ENCODE measurements at regions of chr9 and their contacts with region 1.

Region 1: DNA sequence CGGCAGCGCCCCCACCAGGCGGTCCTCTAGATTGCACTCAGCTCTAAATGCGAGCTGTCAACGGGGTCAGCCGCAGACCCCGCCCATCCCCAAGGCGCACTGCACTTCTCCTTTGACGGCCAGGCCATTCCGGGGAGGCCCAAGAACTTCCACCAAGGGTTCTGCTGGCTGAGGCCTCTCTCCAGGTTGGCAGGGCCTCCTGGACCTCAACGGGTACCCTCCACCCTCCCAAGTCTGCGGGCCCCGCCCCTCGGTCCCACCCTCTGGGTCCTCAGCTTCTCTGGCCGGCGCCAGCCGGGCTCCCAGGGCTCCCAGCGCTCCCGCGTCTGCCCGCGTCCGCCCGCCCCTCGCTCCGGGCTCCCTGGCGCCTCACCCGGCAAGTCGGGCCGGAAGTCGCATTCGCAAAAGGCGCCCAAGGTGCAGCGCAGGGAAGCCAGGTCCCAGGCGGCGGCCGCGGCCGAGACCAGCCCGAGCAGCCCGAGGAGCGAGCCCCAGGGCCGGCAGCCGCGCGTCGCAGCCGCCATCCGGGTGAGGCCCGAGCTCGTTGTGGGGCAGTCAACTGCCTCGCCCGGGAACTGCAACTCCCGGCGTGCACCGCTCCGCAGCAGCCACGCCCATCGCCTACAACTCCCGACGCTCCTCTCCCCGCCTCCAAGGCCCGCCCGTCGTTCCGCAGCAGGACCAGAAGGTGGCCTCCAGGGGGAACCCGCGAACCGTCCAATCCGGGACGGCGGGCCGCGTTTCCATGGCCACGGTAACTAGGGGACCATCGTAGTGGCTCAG is at the start of gene TOR2A:
- DNase-seq: no peak
- H3K4me3 ChIP-seq: peak within 1 kb of the TSS; percentile 75
- CTCF ChIP-seq: peak; percentile 98

Region 2: DNA sequence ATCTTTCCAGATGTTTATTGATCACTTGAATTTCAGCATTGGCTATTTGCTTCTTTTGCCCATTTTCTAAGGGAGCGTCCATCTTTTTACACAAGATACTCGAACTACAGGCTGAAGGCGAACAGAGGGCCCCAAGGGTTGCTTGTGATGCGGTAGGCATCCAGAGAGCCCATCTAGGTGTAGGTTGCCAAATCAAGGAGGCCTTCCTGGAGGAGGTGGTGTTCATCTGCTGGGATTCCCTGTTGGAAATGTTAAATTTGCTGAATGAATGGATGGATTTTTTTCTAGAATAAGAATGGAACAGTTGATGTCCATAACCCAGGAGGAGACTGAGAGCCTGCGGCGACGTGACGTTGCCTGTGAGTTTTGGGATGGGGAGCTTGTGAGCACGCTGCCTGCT is 252.3 kb before region 1 on chr9:
- CTCF ChIA-PET with region 1: no interaction called
- POLR2A ChIA-PET with region 1: no interaction called
- DNase-seq: no peak
- H3K4me3 ChIP-seq: no peak overlapping the region
- CTCF ChIP-seq: no peak

Region 3: DNA sequence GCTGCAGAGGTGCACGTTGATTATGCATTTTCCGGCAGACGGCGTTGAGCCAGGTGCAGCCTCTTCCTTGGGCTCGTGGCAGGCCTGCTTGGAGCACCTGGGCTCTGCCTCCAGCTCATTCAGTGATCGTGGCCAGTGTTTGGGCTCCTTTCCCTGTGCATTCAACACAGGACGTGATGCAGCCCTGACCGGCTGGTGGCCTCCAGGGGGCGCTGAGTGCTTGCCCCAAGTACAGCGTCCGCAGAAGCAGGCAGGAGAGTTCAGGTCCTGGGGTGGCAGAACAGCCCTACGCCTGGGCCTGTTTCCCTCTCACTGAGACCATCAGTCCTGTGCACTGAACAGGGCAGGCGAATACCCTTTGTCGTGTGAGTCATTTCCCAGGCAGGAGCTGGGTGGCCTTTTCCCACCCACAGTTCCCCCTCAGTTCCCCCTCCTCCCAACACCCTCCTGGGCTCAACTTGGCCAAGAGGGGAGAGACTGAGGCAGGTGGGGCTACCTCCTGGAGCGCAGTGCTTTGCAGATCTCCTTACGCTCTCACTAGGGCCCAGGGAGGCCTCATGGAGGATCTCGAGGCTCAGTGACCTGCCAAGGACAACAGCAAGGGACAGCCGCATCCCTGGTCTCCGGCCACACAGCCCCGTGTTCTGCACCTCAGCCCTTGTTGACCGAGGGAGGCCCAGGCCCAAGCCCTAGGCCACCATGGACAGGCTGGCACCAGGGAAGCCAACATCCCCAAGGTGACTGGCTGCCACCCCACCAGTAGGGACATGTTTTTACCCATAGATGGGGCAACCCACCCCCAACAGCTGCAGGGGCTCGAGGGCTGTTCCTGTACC is 230.8 kb before region 1 on chr9:
- CTCF ChIA-PET with region 1: interaction called, 10 read pairs
- POLR2A ChIA-PET with region 1: no interaction called
- DNase-seq: no peak
- H3K4me3 ChIP-seq: no peak overlapping the region
- CTCF ChIP-seq: peak; percentile 95

Region 4: GRCh38 chr9:127611899-127612790 is 122.8 kb before region 1 on chr9 and contains the start of gene STXBP1:
- CTCF ChIA-PET with region 1: interaction called, 24 read pairs
- POLR2A ChIA-PET with region 1: interaction called, 3 read pairs
- DNase-seq: no peak
- H3K4me3 ChIP-seq: peak within 1 kb of the TSS; percentile 79
- CTCF ChIP-seq: peak; percentile 32

Region 5: DNA sequence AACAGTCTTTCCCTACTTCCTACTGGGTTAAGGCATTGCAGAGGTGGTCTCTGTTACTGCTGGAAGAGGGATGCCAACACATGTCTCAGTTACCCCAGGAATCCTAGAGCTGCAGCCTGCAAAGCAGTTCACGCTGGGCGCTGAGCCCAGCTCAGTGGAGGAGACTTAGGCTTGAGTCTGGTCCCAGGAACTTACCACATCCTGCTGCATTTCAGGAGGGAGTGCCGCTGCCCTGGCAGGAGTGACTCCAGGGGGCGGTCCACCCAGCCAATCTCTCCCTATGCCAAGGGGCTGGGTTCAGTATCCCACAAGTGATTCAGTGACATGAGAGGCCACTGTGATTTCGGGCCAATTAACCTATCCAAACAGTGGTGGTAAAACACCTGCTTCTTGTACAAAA is 11.5 kb before region 1 on chr9:
- CTCF ChIA-PET with region 1: interaction called, 48 read pairs
- POLR2A ChIA-PET with region 1: interaction called, 3 read pairs
- DNase-seq: no peak
- H3K4me3 ChIP-seq: no peak overlapping the region
- CTCF ChIP-seq: no peak

Region 6: DNA sequence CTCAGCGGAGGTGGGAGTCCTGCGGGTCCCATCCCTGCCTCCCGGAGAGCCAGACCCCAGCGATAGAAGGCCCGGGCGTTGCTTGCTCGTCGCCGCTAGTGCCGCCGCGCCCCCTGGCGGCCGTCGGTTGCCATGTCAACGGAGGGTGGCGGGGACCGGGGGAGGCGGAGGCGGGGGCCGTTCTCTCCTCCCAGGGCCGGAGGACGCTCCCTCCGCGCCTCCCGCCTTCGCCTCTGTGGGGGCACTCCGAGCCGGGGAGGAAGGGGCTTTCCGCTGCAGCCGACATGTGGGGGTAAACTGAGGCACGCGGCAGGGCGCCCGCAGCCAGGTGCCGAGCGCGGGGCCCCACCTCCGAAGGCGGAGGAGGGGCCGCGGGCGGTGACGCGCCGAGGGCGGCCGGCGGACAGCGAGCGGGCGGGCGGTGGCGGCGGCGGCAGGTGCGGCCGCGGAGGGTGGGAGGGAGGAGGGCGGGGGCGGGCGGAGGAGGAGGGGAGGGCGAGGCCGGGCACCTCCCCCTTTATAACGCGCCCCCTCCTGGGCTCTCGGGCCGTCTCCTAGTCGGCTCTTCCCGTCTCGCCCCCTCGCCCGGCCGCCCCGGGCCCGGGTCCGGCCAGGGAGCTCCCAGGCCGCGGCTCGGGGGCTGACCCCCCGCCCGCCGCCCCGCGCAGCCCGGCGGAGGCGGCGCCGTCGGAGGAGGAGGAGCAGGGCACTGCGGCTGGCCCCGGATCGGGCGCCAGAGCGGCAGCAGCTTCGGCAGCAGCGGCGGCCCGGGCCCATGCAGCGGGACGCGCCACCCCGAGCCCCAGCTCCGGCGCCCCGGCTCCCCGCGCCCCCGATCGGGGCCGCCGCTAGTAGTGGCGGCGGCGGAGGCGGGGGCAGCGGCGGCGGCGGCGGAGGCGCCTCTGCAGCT is 50.3 kb after region 1 on chr9:
- CTCF ChIA-PET with region 1: interaction called, 69 read pairs
- POLR2A ChIA-PET with region 1: no interaction called
- DNase-seq: no peak
- H3K4me3 ChIP-seq: peak overlapping the region; percentile 88
- CTCF ChIP-seq: peak; percentile 87

Measured in AG04449 (cell line).